ENCODE measurements at regions of chr2 and their contacts with region 1.

Region 1: DNA sequence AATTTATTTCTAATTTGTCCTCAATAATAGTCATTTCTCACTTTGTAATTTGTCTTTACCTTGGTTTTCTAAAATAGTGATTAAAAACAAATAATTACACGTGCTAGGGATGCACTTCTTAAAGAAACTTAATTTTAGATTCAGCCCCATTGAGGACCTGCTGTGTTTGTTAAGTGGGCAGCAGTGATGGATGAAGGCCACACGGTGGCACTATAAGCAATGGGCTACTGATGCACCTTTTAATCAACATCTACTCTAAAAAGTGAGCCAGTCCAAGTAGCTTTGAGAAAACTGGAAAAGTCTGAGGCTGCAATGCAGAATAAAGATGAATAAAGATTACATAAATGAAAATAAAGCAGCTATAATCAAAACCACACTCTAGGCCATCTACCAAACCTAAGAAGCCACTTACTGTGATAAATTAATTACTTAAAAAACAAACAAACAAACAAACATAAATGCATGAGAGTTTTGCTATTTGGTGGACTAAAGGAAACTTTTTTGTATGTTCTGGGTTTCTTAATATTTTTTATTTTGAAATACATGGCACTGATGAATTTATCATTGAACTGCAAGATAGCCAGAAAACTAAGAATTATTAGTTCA is 89.3 kb downstream of the PDE11A start:
- DNase-seq: peak; percentile 53
- ATAC-seq: peak; percentile 90
- H3K4me3 ChIP-seq: no peak overlapping the region
- H3K27ac ChIP-seq: no peak overlapping the region
- H3K4me1 ChIP-seq: no peaks in the 10 kb centered on the region
- H3K27me3 ChIP-seq: no peaks in the 10 kb centered on the region
- CTCF ChIP-seq: peak; percentile 80
- EP300 ChIP-seq: no peak
- POLR2A ChIP-seq: no peak
- RAD21 ChIP-seq: peak; percentile 67

Region 2: GRCh38 chr2:178072383-178073301 is 89.4 kb after region 1 on chr2 and contains the start of gene PDE11A:
- CTCF ChIA-PET with region 1: no interaction called
- POLR2A ChIA-PET with region 1: no interaction called
- in situ Hi-C with region 1: no loop called
- intact Hi-C with region 1: loop called (anchors 5 kb)
- DNase-seq: peak; percentile 88
- ATAC-seq: peak; percentile 99
- H3K4me3 ChIP-seq: peak within 1 kb of the TSS; percentile 67 to 77 (median 76)
- H3K27ac ChIP-seq: peak within 1 kb of the TSS; percentile 27
- H3K4me1 ChIP-seq: peaks cover 44% of the 10 kb centered on the region
- H3K27me3 ChIP-seq: peaks cover 0 to 6% of the 10 kb centered on the region in 2 experiments; a peak in 1 of 5 replicates
- CTCF ChIP-seq: no peak; the same call in none of the 2 replicates
- EP300 ChIP-seq: peak; percentile 36 to 67; a peak in 3 of 4 replicates
- POLR2A ChIP-seq: peak; percentile 92 to 95
- RAD21 ChIP-seq: no peak; the same call in 1 of the 2 replicates
- total RNA-seq, gene PDE11A: 1.2 and 1.4 TPM in 2 replicates

Measured in HepG2 (cell line).